ENCODE measurements at regions of chr21 and their contacts with region 1.

Region 1: DNA sequence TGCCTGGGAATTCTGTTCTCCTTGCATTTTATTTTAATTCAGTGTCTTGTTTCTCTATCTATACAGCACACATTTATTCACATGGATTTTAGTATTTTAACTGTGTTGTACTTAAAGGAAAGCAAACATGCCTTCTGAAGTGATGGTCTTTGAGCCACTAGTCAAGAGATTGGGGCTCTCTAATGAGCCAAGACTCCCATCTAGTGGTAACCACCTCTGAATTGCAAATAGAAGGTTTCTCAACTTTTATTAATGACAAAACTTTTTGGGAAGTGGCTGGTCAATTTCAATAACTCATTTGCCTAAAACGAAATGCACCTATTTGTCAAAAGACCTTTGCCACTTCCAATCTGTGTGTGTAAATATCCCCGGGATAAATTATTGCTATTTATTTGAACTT is 199.6 kb downstream of the LTN1 start:
- DNase-seq: peak; percentile 73
- ATAC-seq: peak; percentile 85
- H3K4me3 ChIP-seq: no peak overlapping the region
- H3K27ac ChIP-seq: no peak overlapping the region
- H3K4me1 ChIP-seq: peaks cover 9% of the 10 kb centered on the region
- H3K27me3 ChIP-seq: no peaks in the 10 kb centered on the region
- CTCF ChIP-seq: peak; percentile 75
- POLR2A ChIP-seq: no peak
- RAD21 ChIP-seq: peak; percentile 85

Region 2: DNA sequence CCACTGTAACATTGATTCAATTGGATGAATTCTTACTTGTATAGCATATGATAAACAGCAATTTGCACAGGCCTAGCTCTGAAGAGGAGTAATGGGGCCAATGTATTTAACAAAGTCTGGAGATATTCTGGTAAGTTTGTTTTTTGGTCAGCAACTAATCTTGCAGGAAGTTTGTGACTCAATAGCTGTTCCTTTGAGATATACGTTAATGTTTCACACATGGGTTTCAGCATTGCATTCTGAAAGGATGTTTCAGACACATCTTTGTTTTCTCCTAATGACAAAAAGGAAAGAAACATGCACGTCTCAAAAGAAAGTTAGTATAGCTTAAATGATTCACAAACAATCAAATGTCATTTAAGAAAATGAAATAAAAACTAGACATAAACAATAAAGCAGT is 150.6 kb after region 1 on chr21:
- CTCF ChIA-PET with region 1: no interaction called
- POLR2A ChIA-PET with region 1: no interaction called
- dilution Hi-C with region 1: no loop called
- in situ Hi-C with region 1: loop called (anchors 10 kb)
- intact Hi-C with region 1: loop called (anchors 5 kb)
- DNase-seq: peak; percentile 28
- ATAC-seq: no peak; the same call in 1 of the 2 replicates
- H3K4me3 ChIP-seq: no peak overlapping the region
- H3K27ac ChIP-seq: no peak overlapping the region
- H3K4me1 ChIP-seq: no peaks in the 10 kb centered on the region
- H3K27me3 ChIP-seq: no peaks in the 10 kb centered on the region
- CTCF ChIP-seq: no peak
- POLR2A ChIP-seq: no peak
- RAD21 ChIP-seq: no peak

Measured in IMR-90 (cell line).